MCF 10A (cell line): ENCODE measurements at regions of chr12 and their contacts with region 1.

Region 1: GRCh38 chr12:89542912-89543592 is 17.2 kb upstream of the POC1B start:
- DNase-seq: peak; percentile 87
- H3K4me3 Mint-ChIP-seq: no peak overlapping the region
- H3K27ac Mint-ChIP-seq: no peak overlapping the region
- H3K4me1 Mint-ChIP-seq: peaks cover 34% of the 10 kb centered on the region
- H3K27me3 Mint-ChIP-seq: no peaks in the 10 kb centered on the region
- CTCF ChIP-seq: peak; percentile 89

Region 2: GRCh38 chr12:89084751-89085150 is 458.3 kb before region 1 on chr12:
- CTCF ChIA-PET with region 1: no interaction called
- POLR2A ChIA-PET with region 1: no interaction called
- intact Hi-C with region 1: no loop called
- DNase-seq: no peak
- H3K4me3 Mint-ChIP-seq: no peak overlapping the region
- H3K27ac Mint-ChIP-seq: no peak overlapping the region
- H3K4me1 Mint-ChIP-seq: peaks cover 12% of the 10 kb centered on the region
- H3K27me3 Mint-ChIP-seq: no peaks in the 10 kb centered on the region
- CTCF ChIP-seq: no peak

Region 3: DNA sequence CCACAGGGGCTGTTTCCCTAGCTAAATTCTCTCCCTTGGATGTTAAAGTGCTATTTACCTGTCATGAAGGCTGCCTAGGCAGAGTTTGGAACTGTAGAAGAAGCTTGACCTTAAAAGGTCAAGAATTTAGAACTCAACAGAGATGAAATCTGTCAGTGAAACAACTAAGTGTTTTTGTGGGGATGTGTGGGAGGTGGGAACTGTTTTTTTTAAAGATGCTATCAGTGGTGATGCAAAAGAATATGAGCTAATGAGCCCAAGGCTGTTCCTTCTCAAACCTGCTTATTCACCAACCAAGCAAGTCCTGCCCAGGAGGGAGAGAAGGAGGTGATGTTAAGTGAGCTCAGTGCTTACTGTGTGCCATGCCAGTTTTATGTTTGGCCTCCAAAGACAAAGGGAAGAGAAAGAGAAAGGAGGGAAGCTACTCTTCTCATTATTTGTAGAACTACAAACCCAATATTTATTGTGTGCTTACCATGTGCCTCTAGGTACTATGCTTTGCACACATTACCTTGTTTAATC is 23.6 kb after region 1 on chr12:
- CTCF ChIA-PET with region 1: interaction called, 14 read pairs
- POLR2A ChIA-PET with region 1: interaction called, 5 read pairs
- intact Hi-C with region 1: no loop called
- DNase-seq: peak; percentile 67
- H3K4me3 Mint-ChIP-seq: peak overlapping the region; percentile 2
- H3K27ac Mint-ChIP-seq: peak overlapping the region; percentile 80
- H3K4me1 Mint-ChIP-seq: peaks cover 52% of the 10 kb centered on the region
- H3K27me3 Mint-ChIP-seq: no peaks in the 10 kb centered on the region
- CTCF ChIP-seq: no peak

Region 4: DNA sequence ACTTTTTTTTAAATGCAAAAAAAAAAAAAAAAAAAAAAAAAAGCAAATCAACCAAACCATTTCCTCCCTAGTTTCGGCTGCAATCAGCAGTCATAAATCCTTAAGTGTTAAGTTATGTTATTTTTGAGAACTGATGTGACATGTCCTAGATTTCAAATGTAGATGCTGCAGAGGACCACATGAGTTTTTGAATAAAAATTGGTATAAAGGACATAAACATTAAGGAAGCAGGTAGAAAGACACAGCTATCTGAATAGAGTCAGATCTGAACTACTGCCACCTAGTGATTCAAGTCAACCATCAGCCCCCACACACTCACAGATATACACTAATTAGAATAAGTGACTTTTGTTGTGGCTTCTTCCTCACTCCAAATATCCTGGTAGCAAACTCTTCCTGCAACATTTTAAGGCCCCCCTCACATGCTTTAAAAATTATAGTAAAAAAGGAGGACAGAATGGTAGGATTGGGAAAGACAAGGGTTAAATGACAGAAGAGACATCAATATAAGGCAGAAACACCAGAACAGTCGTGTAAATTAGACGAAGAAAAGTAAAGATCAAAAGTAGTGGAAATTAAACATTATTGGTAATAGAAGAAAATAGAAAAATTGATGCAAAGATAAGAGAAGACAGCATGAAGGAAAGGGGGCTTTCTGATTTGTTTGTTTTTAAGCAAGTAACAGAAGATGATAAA is 560.1 kb after region 1 on chr12:
- CTCF ChIA-PET with region 1: interaction called, 21 read pairs
- POLR2A ChIA-PET with region 1: interaction called, 3 read pairs
- intact Hi-C with region 1: loop called (anchors 1 kb)
- DNase-seq: peak; percentile 53
- H3K4me3 Mint-ChIP-seq: no peak overlapping the region
- H3K27ac Mint-ChIP-seq: no peak overlapping the region
- H3K4me1 Mint-ChIP-seq: peaks cover 10% of the 10 kb centered on the region
- H3K27me3 Mint-ChIP-seq: no peaks in the 10 kb centered on the region
- CTCF ChIP-seq: peak; percentile 36

Region 5: GRCh38 chr12:90854136-90854689 is 1311.2 kb after region 1 on chr12:
- CTCF ChIA-PET with region 1: interaction called, 8 read pairs
- POLR2A ChIA-PET with region 1: no interaction called
- intact Hi-C with region 1: loop called (anchors 1 kb)
- DNase-seq: peak; percentile 64
- H3K4me3 Mint-ChIP-seq: no peak overlapping the region
- H3K27ac Mint-ChIP-seq: no peak overlapping the region
- H3K4me1 Mint-ChIP-seq: no peaks in the 10 kb centered on the region
- H3K27me3 Mint-ChIP-seq: no peaks in the 10 kb centered on the region
- CTCF ChIP-seq: peak; percentile 61

Region 6: GRCh38 chr12:90940872-90941499 is 1397.9 kb after region 1 on chr12:
- CTCF ChIA-PET with region 1: interaction called, 13 read pairs
- POLR2A ChIA-PET with region 1: no interaction called
- intact Hi-C with region 1: loop called (anchors 2 kb)
- DNase-seq: peak; percentile 68
- H3K4me3 Mint-ChIP-seq: no peak overlapping the region
- H3K27ac Mint-ChIP-seq: no peak overlapping the region
- H3K4me1 Mint-ChIP-seq: peaks cover 6% of the 10 kb centered on the region
- H3K27me3 Mint-ChIP-seq: no peaks in the 10 kb centered on the region
- CTCF ChIP-seq: peak; percentile 68